ENCODE measurements at regions of chr4 and their contacts with region 1.

Region 1: DNA sequence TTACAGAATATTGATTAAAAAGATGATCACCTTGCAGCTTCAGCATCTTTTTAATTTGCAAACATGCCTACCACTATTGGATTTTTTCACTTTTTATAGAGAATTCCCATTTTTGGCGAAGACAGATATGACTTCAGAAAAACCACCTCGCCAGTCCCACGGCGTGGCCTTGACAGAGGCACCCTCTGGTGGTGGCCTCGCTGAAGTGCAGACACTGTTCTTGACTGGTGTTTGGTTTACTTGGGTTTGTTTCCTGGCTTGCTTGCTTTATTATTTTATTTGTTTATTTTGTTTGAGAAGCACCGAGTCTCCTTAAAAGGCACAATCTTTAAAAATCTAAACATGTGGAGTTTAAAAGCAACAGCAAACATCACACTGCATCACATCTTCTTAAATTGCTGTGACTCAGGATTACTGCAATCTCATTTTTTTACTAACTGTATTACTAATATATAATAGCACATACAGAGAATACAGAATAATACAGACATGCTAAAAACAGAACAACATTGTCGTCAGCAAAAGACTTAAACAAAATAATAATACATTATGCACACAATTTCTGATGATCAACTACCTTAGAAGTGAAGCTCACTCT is 13.1 kb upstream of the AMTN start:
- DNase-seq: no peak
- H3K4me3 ChIP-seq: no peak overlapping the region
- H3K27ac ChIP-seq: no peak overlapping the region
- H3K4me1 ChIP-seq: no peaks in the 10 kb centered on the region
- H3K27me3 ChIP-seq: peaks cover 0 to 5% (median 0%) of the 10 kb centered on the region in 4 donors
- CTCF ChIP-seq: peak; percentile 64 to 90 (median 77)
- EP300 ChIP-seq: no peak
- POLR2A ChIP-seq: no peak

Region 2: DNA sequence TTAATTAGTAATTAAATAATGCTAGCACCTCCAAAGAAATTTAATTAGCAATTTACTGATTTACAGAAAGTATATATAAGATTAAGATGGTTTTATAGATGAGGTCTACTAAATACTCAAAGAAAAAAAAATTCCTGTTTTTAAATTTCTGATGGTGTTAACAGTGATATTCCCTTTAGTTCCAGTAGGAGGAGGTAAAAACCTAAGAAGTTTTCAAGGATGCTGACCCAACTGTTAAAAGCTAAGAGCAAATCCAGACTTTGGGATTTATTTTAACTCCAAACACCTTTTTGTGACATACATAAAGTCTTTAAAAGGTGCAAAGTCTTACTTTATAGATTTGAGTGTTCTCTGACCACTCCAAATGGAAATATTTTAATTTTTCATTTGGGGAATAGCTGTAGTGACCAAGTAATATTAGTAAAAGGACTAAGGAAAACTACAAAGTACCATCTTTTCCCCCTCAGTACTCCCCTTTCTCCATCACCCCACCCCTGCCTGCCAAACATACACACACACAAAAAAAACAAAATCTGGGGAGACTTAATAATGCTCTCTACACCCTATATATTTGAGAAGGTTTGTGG is 608.6 kb before region 1 on chr4:
- intact Hi-C with region 1: loop called (anchors 10 kb)
- DNase-seq: no peak
- H3K4me3 ChIP-seq: no peak overlapping the region
- H3K27ac ChIP-seq: no peak overlapping the region
- H3K4me1 ChIP-seq: no peaks in the 10 kb centered on the region
- H3K27me3 ChIP-seq: no peaks in the 10 kb centered on the region
- CTCF ChIP-seq: peak in 1 of 3 experiments; percentile 40
- EP300 ChIP-seq: no peak
- POLR2A ChIP-seq: no peak

Region 3: DNA sequence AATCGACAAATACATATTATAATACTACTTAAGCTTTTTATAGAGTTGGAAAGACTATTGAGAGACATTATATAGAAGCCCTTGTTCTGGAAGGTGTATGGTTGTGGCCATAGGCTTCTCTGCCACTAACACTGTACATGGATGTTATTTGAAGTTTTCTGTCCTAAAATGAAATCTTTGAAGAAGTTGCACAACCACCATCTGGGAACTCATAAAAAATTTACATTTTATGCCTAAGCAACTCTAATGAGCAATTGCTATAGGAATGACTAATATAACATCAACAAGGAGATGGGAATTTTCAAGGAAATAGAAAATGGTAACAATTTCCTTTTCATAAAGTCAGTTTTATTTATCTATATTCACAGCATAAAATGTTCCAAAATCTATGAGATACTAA is 447.6 kb before region 1 on chr4:
- intact Hi-C with region 1: no loop called
- DNase-seq: no peak
- H3K4me3 ChIP-seq: no peak overlapping the region
- H3K27ac ChIP-seq: no peak overlapping the region
- H3K4me1 ChIP-seq: no peaks in the 10 kb centered on the region
- H3K27me3 ChIP-seq: no peaks in the 10 kb centered on the region
- CTCF ChIP-seq: no peak
- EP300 ChIP-seq: no peak
- POLR2A ChIP-seq: no peak

Region 4: GRCh38 chr4:70463335-70463734 is 41.9 kb before region 1 on chr4:
- intact Hi-C with region 1: no loop called
- DNase-seq: no peak
- H3K4me3 ChIP-seq: no peak overlapping the region
- H3K27ac ChIP-seq: no peak overlapping the region
- H3K4me1 ChIP-seq: no peaks in the 10 kb centered on the region
- H3K27me3 ChIP-seq: peaks cover 0 to 6% (median 0%) of the 10 kb centered on the region in 4 donors
- CTCF ChIP-seq: no peak
- EP300 ChIP-seq: no peak
- POLR2A ChIP-seq: no peak

Region 5: GRCh38 chr4:70654605-70655011 is 149.4 kb after region 1 on chr4:
- intact Hi-C with region 1: no loop called
- DNase-seq: no peak
- H3K4me3 ChIP-seq: no peak overlapping the region
- H3K27ac ChIP-seq: no peak overlapping the region
- H3K4me1 ChIP-seq: peaks cover 0 to 5% (median 2%) of the 10 kb centered on the region in 4 donors
- H3K27me3 ChIP-seq: peaks cover 0 to 5% (median 0%) of the 10 kb centered on the region in 4 donors
- CTCF ChIP-seq: no peak
- EP300 ChIP-seq: no peak
- POLR2A ChIP-seq: no peak

Measured in esophagus muscularis mucosa (tissue), 4 donors.